HCT116 (cell line): ENCODE measurements at regions of chr3 and their contacts with region 1.

Region 1: GRCh38 chr3:138180375-138181029 is 5.8 kb upstream of the DBR1 start:
- DNase-seq: peak; percentile 41
- ATAC-seq: peak; percentile 90
- H3K4me3 ChIP-seq: no peak overlapping the region
- H3K27ac ChIP-seq: no peak overlapping the region
- H3K4me1 ChIP-seq: peaks cover 4 to 11% of the 10 kb centered on the region in 2 experiments; a peak in 3 of 4 replicates
- H3K27me3 ChIP-seq: no peaks in the 10 kb centered on the region
- CTCF ChIP-seq: peak; percentile 55 to 81 (median 70)
- POLR2A ChIP-seq: no peak
- RAD21 ChIP-seq: peak; percentile 94

Region 2: GRCh38 chr3:137906985-137907640 is 273.4 kb before region 1 on chr3:
- CTCF ChIA-PET with region 1: no interaction called
- POLR2A ChIA-PET with region 1: no interaction called
- RAD21 ChIA-PET with region 1: no interaction called
- intact Hi-C with region 1: no loop called
- DNase-seq: no peak
- ATAC-seq: no peak
- H3K4me3 ChIP-seq: no peak overlapping the region
- H3K27ac ChIP-seq: no peak overlapping the region
- H3K4me1 ChIP-seq: no peaks in the 10 kb centered on the region
- H3K27me3 ChIP-seq: peaks cover 2% of the 10 kb centered on the region; the same call in 1 of the 2 replicates
- CTCF ChIP-seq: no peak
- POLR2A ChIP-seq: no peak
- RAD21 ChIP-seq: no peak

Region 3: DNA sequence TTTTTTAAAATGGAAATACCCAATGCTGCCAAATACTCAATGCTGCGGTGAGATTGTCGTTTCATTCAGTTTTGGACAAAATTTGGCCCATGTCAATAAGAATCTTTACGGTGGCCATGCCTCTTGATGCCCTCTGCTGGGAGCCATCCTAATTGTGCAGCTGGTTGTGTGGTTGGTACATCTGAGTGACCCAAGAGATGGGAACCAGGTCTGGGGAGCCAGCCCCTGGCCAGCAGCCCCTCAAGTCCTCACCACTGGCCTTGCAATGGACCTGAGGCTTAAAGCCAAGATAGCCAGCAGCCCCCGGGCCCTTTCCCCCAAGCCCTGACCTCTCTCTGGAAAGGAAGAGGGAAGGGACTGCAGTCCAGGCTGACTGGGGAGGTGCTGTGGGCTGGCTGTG is 217.5 kb after region 1 on chr3:
- CTCF ChIA-PET with region 1: no interaction called
- POLR2A ChIA-PET with region 1: no interaction called
- RAD21 ChIA-PET with region 1: no interaction called
- intact Hi-C with region 1: loop called (anchors 1 kb)
- DNase-seq: no peak
- ATAC-seq: peak; percentile 62; the same call in 1 of the 2 replicates
- H3K4me3 ChIP-seq: no peak overlapping the region
- H3K27ac ChIP-seq: no peak overlapping the region
- H3K4me1 ChIP-seq: no peaks in the 10 kb centered on the region
- H3K27me3 ChIP-seq: no peaks in the 10 kb centered on the region
- CTCF ChIP-seq: peak; percentile 21 to 46 (median 34); a peak in 4 of 6 replicates
- POLR2A ChIP-seq: no peak
- RAD21 ChIP-seq: peak; percentile 53

Region 4: DNA sequence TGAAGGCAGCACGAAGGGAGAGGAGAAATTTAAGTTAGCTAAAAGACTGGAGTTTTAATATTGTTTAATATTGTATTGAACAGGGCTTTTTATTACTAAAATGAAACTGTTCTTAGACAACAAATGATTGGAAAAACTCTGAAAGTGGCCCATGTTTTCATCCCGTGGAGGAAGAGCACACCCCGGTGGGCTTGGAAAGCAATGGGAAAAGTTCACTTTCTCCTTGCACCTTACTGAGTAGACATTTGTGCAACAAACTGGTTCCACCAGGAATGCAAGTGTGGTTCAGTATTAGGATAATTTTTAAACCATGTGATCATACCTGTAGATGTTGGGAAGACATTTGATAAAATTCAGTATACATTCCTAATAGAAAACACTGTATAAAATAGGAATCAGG is 245.7 kb after region 1 on chr3:
- CTCF ChIA-PET with region 1: no interaction called
- POLR2A ChIA-PET with region 1: no interaction called
- RAD21 ChIA-PET with region 1: no interaction called
- intact Hi-C with region 1: loop called (anchors 2 kb)
- DNase-seq: peak; percentile 28
- ATAC-seq: peak; percentile 76
- H3K4me3 ChIP-seq: no peak overlapping the region
- H3K27ac ChIP-seq: no peak overlapping the region
- H3K4me1 ChIP-seq: no peaks in the 10 kb centered on the region
- H3K27me3 ChIP-seq: no peaks in the 10 kb centered on the region
- CTCF ChIP-seq: peak; percentile 54 to 68 (median 65); a peak in 5 of 6 replicates
- POLR2A ChIP-seq: no peak
- RAD21 ChIP-seq: peak; percentile 86